MCF 10A (cell line): ENCODE measurements at regions of chr1 and their contacts with region 1.

Region 1: GRCh38 chr1:17236779-17237560 is 11.9 kb upstream of the PADI3 start:
- DNase-seq: peak; percentile 94
- H3K4me3 Mint-ChIP-seq: no peak overlapping the region
- H3K27ac Mint-ChIP-seq: no peak overlapping the region
- H3K4me1 Mint-ChIP-seq: peaks cover 37% of the 10 kb centered on the region
- H3K27me3 Mint-ChIP-seq: no peaks in the 10 kb centered on the region
- CTCF ChIP-seq: peak; percentile 78

Region 2: GRCh38 chr1:16954579-16954978 is 282.4 kb before region 1 on chr1:
- CTCF ChIA-PET with region 1: interaction called, 3 read pairs
- POLR2A ChIA-PET with region 1: no interaction called
- intact Hi-C with region 1: loop called (anchors 5 kb)
- DNase-seq: no peak
- H3K4me3 Mint-ChIP-seq: no peak overlapping the region
- H3K27ac Mint-ChIP-seq: no peak overlapping the region
- H3K4me1 Mint-ChIP-seq: peaks cover 8% of the 10 kb centered on the region
- H3K27me3 Mint-ChIP-seq: no peaks in the 10 kb centered on the region
- CTCF ChIP-seq: no peak

Region 3: DNA sequence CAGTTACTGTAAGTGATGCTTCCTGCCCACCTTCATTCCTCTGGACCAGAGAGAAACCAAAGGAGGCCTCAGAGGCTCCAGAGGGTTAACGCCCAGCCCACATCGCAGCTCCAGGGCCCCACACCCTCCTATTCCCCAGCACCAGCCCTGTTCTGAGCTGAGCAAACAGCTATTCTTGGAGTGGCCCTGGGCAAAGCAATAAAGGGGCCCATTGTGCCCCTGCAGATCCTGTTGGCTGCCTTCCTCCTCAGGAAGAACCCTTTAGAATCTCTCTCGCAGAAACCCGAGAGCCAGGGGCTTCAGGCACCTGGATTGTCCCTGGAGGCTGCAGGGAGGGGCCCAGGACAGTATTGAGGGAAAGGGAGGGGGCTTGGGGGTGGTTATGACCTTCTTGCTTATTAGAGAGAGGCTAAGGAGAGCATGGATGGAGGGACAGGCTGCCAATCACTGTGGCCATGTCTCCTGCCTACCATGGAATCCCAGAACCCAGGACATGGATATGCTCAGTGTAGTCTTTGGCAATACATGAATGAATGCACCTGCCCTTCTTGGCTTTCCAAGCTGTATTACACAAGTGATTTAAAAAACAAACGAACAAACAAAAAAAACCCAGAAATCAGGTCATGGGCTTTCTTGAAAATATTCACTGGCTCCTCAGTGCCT is 126.9 kb before region 1 on chr1:
- CTCF ChIA-PET with region 1: no interaction called
- POLR2A ChIA-PET with region 1: no interaction called
- intact Hi-C with region 1: no loop called
- DNase-seq: no peak
- H3K4me3 Mint-ChIP-seq: no peak overlapping the region
- H3K27ac Mint-ChIP-seq: no peak overlapping the region
- H3K4me1 Mint-ChIP-seq: no peaks in the 10 kb centered on the region
- H3K27me3 Mint-ChIP-seq: no peaks in the 10 kb centered on the region
- CTCF ChIP-seq: no peak

Region 4: GRCh38 chr1:17125756-17126237 is 111.2 kb before region 1 on chr1:
- CTCF ChIA-PET with region 1: interaction called, 168 read pairs
- POLR2A ChIA-PET with region 1: interaction called, 50 read pairs
- intact Hi-C with region 1: loop called (anchors 1 kb)
- DNase-seq: peak; percentile 84
- H3K4me3 Mint-ChIP-seq: no peak overlapping the region
- H3K27ac Mint-ChIP-seq: peak overlapping the region; percentile 59
- H3K4me1 Mint-ChIP-seq: peaks cover 8% of the 10 kb centered on the region
- H3K27me3 Mint-ChIP-seq: no peaks in the 10 kb centered on the region
- CTCF ChIP-seq: peak; percentile 96

Region 5: GRCh38 chr1:17190010-17190995 is 46.7 kb before region 1 on chr1:
- CTCF ChIA-PET with region 1: no interaction called
- POLR2A ChIA-PET with region 1: interaction called, 5 read pairs
- intact Hi-C with region 1: loop called (anchors 5 kb)
- DNase-seq: peak; percentile 93
- H3K4me3 Mint-ChIP-seq: peak overlapping the region; percentile 25
- H3K27ac Mint-ChIP-seq: peak overlapping the region; percentile 92
- H3K4me1 Mint-ChIP-seq: peaks cover 61% of the 10 kb centered on the region
- H3K27me3 Mint-ChIP-seq: no peaks in the 10 kb centered on the region
- CTCF ChIP-seq: no peak

Region 6: DNA sequence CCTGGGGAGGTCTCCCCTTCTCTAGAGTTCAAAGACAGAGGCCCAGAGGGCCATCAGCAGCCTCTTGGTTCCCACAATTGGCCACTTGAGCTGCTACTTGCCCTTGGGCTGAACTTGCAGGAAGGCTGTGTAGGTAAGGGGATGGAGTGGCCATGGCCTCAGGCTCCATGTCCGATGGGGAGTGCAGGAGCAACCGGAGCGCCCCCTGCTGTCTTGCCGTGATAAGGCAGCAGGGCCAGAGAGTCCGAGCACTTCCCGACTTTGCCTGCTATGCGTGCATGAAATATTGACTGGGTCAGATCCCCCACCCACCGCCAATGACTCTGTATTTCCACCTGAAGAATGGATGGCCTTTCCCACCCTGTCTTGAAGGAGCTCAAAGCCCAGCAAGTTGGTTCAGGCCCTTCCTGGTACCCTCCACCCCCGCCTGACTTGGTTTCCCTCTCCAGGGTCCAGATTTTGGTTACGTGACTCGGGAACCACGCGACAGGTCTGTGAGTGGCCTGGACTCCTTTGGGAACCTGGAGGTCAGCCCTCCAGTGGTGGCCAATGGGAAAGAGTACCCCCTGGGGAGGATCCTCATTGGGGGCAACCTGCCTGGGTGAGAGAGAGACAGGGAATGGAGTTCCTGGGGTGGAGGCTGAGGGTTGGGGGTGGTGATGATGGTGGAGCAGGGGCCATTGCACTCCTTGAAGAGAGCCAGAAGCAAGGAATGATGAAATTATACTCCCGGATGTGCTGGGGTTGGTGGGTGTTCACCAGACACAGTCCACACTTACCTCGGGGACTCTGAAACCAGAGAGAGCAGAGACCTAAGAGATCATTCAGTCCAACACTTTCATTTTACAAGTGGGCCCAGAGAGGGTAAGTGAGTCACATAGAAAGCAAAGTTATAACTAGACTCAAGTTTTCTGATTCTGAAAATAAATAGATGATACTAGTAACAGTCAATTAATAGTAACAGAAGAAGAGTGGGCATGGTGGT is 37.5 kb after region 1 on chr1:
- CTCF ChIA-PET with region 1: interaction called, 3 read pairs
- POLR2A ChIA-PET with region 1: no interaction called
- intact Hi-C with region 1: loop called (anchors 2 kb)
- DNase-seq: peak; percentile 61
- H3K4me3 Mint-ChIP-seq: no peak overlapping the region
- H3K27ac Mint-ChIP-seq: no peak overlapping the region
- H3K4me1 Mint-ChIP-seq: peaks cover 4% of the 10 kb centered on the region
- H3K27me3 Mint-ChIP-seq: no peaks in the 10 kb centered on the region
- CTCF ChIP-seq: peak; percentile 82

Region 7: GRCh38 chr1:17335821-17336710 is 99.1 kb after region 1 on chr1:
- CTCF ChIA-PET with region 1: interaction called, 14 read pairs
- POLR2A ChIA-PET with region 1: interaction called, 3 read pairs
- intact Hi-C with region 1: loop called (anchors 1 kb)
- DNase-seq: peak; percentile 88
- H3K4me3 Mint-ChIP-seq: no peak overlapping the region
- H3K27ac Mint-ChIP-seq: no peak overlapping the region
- H3K4me1 Mint-ChIP-seq: peaks cover 17% of the 10 kb centered on the region
- H3K27me3 Mint-ChIP-seq: no peaks in the 10 kb centered on the region
- CTCF ChIP-seq: peak; percentile 81